Adrenal gland (tissue), 19 donors: ENCODE measurements at regions of chr2 and their contacts with region 1.

Region 1: DNA sequence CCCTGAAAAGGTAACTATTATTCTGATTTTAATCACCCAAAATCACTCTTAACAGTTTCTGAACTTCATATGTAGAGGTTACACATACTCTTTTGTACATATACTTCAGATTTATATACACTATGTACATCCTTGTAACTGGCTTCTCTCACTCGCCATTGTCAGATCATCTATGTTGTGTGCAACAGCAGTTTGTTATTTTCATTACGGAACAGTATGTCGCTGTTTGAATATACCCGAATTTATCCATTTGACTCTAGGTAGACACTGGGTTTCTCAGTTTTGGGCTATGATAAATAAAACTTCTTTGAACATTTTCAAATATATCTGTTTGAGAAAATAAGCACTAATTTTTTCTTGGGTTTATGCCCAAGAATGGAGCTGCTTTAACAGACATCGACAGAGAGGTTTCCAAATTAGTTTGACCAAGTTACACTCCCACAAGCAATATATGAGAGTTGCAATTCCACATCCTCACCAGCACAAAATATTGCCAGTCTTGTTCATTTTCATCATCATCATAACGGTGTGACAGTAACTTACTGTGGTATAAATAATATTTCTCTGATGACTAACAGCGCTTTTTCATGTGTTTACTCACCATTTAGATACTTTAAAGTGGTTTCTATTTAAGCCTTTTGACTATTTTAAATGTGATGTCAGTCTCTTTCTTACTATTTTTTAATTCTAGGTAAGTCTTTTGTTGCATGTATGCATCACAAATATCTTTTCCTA is 80.9 kb downstream of the SMC6 start:
- DNase-seq: no peak
- H3K4me3 ChIP-seq: no peak overlapping the region
- H3K27ac ChIP-seq: no peak overlapping the region
- H3K4me1 ChIP-seq: no peaks in the 10 kb centered on the region
- H3K27me3 ChIP-seq: no peaks in the 10 kb centered on the region
- CTCF ChIP-seq: no peak
- POLR2A ChIP-seq: no peak

Region 2: GRCh38 chr2:17000184-17000482 is 672.6 kb before region 1 on chr2:
- intact Hi-C with region 1: loop called in 1 of 2 experiments (anchors 10 kb)
- DNase-seq: no peak
- H3K4me3 ChIP-seq: no peak overlapping the region
- H3K27ac ChIP-seq: no peak overlapping the region
- H3K4me1 ChIP-seq: no peaks in the 10 kb centered on the region
- H3K27me3 ChIP-seq: no peaks in the 10 kb centered on the region
- CTCF ChIP-seq: no peak
- POLR2A ChIP-seq: no peak

Region 3: GRCh38 chr2:17791121-17791816 is 118.5 kb after region 1 on chr2:
- intact Hi-C with region 1: no loop called
- DNase-seq: peak in 1 of 7 donors; percentile 22
- H3K4me3 ChIP-seq: no peak overlapping the region
- H3K27ac ChIP-seq: no peak overlapping the region
- H3K4me1 ChIP-seq: no peaks in the 10 kb centered on the region
- H3K27me3 ChIP-seq: no peaks in the 10 kb centered on the region
- CTCF ChIP-seq: no peak
- POLR2A ChIP-seq: no peak